Endothelial cell of umbilical vein (primary cell): ENCODE measurements at regions of chr20 and their contacts with region 1.

Region 1: DNA sequence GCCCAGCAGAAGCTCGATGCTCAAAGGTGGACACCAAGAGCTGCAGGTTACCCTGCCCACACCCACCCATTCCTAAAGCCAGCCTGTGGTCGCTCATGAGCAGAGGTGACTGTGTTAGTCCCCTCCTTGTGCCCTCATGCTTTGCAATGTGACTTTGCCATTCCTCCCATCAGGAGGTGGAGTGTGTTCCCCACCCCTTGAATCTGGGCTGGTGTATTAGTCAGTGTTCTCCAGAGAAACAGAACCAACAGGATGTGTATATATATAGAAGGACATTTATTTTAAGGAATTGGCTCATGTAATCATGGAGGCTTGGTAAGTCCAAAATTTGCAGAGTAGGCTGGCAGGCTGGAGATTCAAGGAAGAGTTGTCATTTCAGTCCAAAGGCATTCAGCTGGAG is 54.4 kb upstream of the RNF24 start:
- DNase-seq: no peak
- H3K4me3 ChIP-seq: no peak overlapping the region
- H3K27ac ChIP-seq: no peak overlapping the region
- H3K4me1 ChIP-seq: peaks cover 28% of the 10 kb centered on the region
- H3K27me3 ChIP-seq: no peaks in the 10 kb centered on the region
- CTCF ChIP-seq: no peak
- POLR2A ChIP-seq: no peak

Region 2: GRCh38 chr20:3786665-3787323 is 283.0 kb before region 1 on chr20 and contains the start of gene CENPB:
- CTCF ChIA-PET with region 1: interaction called, 14 read pairs
- POLR2A ChIA-PET with region 1: no interaction called
- dilution Hi-C with region 1: no loop called
- intact Hi-C with region 1: no loop called
- DNase-seq: peak; percentile 83
- H3K4me3 ChIP-seq: peak within 1 kb of the TSS; percentile 30 to 62 (median 58)
- H3K27ac ChIP-seq: peak within 1 kb of the TSS; percentile 0
- H3K4me1 ChIP-seq: peaks cover 18% of the 10 kb centered on the region
- H3K27me3 ChIP-seq: no peaks in the 10 kb centered on the region
- CTCF ChIP-seq: peak; percentile 56 to 62
- POLR2A ChIP-seq: no peak
- total RNA-seq, gene CENPB: 82.2 and 90.3 TPM in 2 replicates

Region 3: DNA sequence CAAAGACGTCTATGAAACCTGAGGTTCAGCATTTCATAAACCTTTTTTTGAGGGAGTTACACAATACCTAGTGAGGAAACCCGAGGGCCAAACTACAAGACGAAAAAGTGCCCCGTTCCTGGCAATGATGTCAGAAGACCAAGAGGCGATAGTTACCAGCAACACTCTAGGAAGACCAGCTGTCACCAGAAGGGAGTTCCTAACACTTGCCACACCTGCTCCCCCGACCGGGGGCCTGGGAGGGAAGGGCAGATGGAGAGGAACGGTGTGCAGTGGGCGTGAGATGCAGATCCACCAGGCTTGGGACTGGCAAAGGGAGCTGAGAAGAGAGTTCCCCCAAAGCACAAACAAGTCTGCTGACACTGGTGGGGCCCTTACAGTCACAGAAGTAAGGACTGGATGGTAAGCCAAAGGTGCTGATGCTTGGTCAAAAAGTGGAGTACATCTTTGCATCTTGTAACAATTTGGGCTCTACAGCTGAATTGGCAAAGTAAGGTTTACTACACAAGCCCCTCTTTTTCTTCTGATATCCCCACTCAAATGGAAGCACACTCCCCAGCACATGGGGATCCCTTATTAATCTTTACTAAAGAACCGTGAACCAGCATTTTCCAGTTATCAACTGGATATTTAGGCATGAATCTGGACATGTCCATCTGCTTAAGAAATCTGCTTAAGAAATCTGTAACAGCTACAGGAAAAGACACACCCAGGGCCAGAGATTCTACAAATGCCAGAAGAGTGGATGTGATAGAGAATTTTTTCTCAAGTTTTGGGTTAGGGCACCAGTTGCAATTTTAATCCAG is 142.1 kb before region 1 on chr20:
- CTCF ChIA-PET with region 1: interaction called, 47 read pairs
- POLR2A ChIA-PET with region 1: no interaction called
- dilution Hi-C with region 1: no loop called
- intact Hi-C with region 1: loop called (anchors 2 kb)
- DNase-seq: no peak
- H3K4me3 ChIP-seq: no peak overlapping the region
- H3K27ac ChIP-seq: no peak overlapping the region
- H3K4me1 ChIP-seq: peaks cover 9% of the 10 kb centered on the region
- H3K27me3 ChIP-seq: no peaks in the 10 kb centered on the region
- CTCF ChIP-seq: no peak
- POLR2A ChIP-seq: no peak

Region 4: DNA sequence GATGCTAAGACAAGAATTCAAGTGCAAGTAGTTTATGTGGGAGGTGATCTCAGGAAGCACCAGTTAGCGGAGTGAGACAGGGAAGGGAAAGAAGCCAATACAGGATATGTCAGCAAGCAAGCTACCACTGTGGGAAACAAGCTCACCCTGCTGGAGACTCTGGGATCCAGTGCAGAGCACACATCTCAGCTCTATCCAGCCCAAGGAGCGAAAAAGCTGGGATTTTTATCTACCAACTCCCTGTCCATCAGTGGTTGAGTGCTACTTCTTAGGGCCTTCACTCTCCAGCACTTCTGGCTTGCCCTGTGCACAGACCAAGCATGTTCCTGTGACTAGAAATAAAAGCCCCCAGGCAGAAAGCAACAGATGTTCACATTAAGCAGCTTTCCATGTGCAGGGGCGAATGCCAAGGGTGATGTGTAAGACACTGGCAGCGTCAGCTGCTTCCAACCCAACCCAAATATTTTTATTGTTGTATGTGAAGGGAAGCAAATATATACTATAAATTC is 43.6 kb before region 1 on chr20:
- CTCF ChIA-PET with region 1: interaction called, 41 read pairs
- POLR2A ChIA-PET with region 1: no interaction called
- dilution Hi-C with region 1: no loop called
- intact Hi-C with region 1: no loop called
- DNase-seq: peak; percentile 61
- H3K4me3 ChIP-seq: no peak overlapping the region
- H3K27ac ChIP-seq: no peak overlapping the region
- H3K4me1 ChIP-seq: no peaks in the 10 kb centered on the region
- H3K27me3 ChIP-seq: peaks cover 18 to 28% of the 10 kb centered on the region in 2 experiments
- CTCF ChIP-seq: peak in 1 of 2 donors; percentile 47
- POLR2A ChIP-seq: no peak

Region 5: DNA sequence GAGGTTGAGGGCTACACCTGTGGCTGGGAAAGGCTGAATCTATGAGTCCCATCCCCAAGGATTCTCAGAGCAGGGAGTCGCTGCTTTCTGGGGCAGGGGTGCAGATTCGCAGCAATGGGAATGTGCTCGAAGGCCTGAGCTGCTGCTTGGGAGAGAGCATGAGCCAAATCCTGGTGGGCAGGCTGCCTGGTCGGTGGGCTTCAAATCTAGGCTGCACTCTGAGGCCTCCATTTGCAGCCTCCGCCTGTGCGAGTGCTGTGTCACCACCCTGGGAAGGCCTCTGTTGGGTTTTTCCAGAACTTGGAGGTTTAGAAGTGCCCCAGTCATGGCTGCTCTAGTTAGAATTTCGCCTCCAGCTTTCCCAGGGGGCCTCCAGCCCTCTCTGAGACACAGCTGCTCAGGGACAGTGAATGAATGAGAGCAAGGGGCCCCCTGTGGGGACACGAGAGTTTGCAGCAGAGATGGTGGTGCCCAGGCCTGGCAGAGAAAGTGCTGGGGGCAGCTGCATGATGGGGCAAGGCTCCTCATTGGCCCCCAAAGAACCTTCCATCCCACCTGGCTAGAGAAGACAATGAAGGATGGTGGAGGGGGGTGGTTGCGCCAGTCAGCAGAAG is 23.3 kb before region 1 on chr20:
- CTCF ChIA-PET with region 1: interaction called, 11 read pairs
- POLR2A ChIA-PET with region 1: no interaction called
- dilution Hi-C with region 1: no loop called
- intact Hi-C with region 1: no loop called
- DNase-seq: no peak
- H3K4me3 ChIP-seq: no peak overlapping the region
- H3K27ac ChIP-seq: no peak overlapping the region
- H3K4me1 ChIP-seq: peaks cover 11% of the 10 kb centered on the region
- H3K27me3 ChIP-seq: no peaks in the 10 kb centered on the region
- CTCF ChIP-seq: no peak
- POLR2A ChIP-seq: no peak

Region 6: GRCh38 chr20:4135385-4136077 is 65.8 kb after region 1 on chr20:
- CTCF ChIA-PET with region 1: no interaction called
- POLR2A ChIA-PET with region 1: no interaction called
- dilution Hi-C with region 1: no loop called
- intact Hi-C with region 1: no loop called
- DNase-seq: peak; percentile 93
- H3K4me3 ChIP-seq: no peak overlapping the region
- H3K27ac ChIP-seq: peak overlapping the region; percentile 71
- H3K4me1 ChIP-seq: peaks cover 32% of the 10 kb centered on the region
- H3K27me3 ChIP-seq: no peaks in the 10 kb centered on the region
- CTCF ChIP-seq: no peak
- POLR2A ChIP-seq: no peak